SK-N-SH (cell line): ENCODE measurements at regions of chr3 and their contacts with region 1.

Region 1: DNA sequence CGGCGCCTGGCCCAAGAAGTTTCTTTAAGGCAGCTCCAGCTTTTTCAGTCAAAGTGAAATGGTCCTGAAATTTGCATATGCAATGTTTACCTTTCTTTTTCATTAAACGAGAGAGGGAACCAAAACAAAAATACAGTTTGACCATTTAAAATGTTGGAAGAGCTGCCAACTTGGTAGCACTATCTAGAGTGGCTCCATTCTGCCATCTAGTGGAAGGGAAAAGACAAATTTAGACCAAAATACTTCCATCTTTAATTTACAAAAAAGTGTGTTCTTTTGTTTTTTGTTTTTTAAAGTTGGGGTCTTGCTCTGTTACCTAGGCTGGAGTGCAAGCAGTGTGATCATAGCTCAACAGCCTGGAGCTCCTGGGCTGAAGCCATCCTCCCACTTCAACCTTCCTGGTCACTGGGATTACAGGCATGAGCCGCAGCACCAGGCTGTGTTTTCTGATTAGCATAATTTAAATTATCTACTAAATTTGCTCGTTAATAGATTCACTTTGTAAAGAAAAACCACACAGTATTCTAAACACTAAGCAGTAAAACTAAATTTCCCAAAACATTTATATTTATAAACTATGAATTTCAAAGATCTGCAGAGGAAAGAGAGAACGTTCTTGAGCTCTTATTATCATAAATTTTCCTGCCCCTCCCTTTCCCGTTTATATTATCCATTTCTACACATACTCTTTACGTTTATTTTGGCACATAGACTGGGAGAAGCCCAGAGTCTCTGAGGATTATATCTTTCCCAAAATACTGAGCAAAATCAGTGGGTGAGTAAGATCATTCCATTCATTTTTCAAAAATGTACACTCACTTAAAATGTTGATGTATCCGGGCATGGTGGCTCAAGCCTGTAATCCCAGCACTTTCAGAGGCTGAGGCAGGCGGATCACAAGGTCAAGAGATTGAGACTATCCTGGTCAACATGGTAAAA is 15.4 kb upstream of the RFC4 start:
- DNase-seq: peak; percentile 54
- H3K4me3 ChIP-seq: peak overlapping the region in 1 of 2 experiments; percentile 25; a peak in 1 of 4 replicates
- H3K27ac ChIP-seq: peak overlapping the region in 1 of 2 experiments; percentile 45; a peak in 2 of 4 replicates
- H3K4me1 ChIP-seq: no peaks in the 10 kb centered on the region; a peak in 1 of 4 replicates
- H3K27me3 ChIP-seq: no peaks in the 10 kb centered on the region
- CTCF ChIP-seq: peak; percentile 80
- EP300 ChIP-seq: no peak
- RAD21 ChIP-seq: peak; percentile 80

Region 2: GRCh38 chr3:186583831-186584230 is 237.9 kb before region 1 on chr3:
- CTCF ChIA-PET with region 1: interaction called, 11 read pairs
- POLR2A ChIA-PET with region 1: no interaction called
- DNase-seq: no peak
- H3K4me3 ChIP-seq: no peak overlapping the region
- H3K27ac ChIP-seq: no peak overlapping the region
- H3K4me1 ChIP-seq: no peaks in the 10 kb centered on the region
- H3K27me3 ChIP-seq: no peaks in the 10 kb centered on the region
- CTCF ChIP-seq: no peak
- EP300 ChIP-seq: no peak
- RAD21 ChIP-seq: no peak

Region 3: GRCh38 chr3:186589121-186589520 is 232.6 kb before region 1 on chr3:
- CTCF ChIA-PET with region 1: interaction called, 11 read pairs
- POLR2A ChIA-PET with region 1: no interaction called
- DNase-seq: no peak
- H3K4me3 ChIP-seq: no peak overlapping the region
- H3K27ac ChIP-seq: no peak overlapping the region
- H3K4me1 ChIP-seq: no peaks in the 10 kb centered on the region
- H3K27me3 ChIP-seq: no peaks in the 10 kb centered on the region
- CTCF ChIP-seq: peak; percentile 34
- EP300 ChIP-seq: no peak
- RAD21 ChIP-seq: peak; percentile 64

Region 4: GRCh38 chr3:186609247-186609868 is 212.3 kb before region 1 on chr3:
- CTCF ChIA-PET with region 1: interaction called, 119 read pairs
- POLR2A ChIA-PET with region 1: no interaction called
- DNase-seq: no peak
- H3K4me3 ChIP-seq: no peak overlapping the region
- H3K27ac ChIP-seq: no peak overlapping the region
- H3K4me1 ChIP-seq: no peaks in the 10 kb centered on the region; a peak in 1 of 4 replicates
- H3K27me3 ChIP-seq: peaks cover 4% of the 10 kb centered on the region; the same call in 1 of the 2 replicates
- CTCF ChIP-seq: peak; percentile 27; the same call in 1 of the 2 replicates
- EP300 ChIP-seq: no peak
- RAD21 ChIP-seq: no peak

Region 5: GRCh38 chr3:186625600-186626042 is 196.1 kb before region 1 on chr3:
- CTCF ChIA-PET with region 1: interaction called, 119 read pairs
- POLR2A ChIA-PET with region 1: no interaction called
- DNase-seq: no peak
- H3K4me3 ChIP-seq: no peak overlapping the region
- H3K27ac ChIP-seq: no peak overlapping the region
- H3K4me1 ChIP-seq: no peaks in the 10 kb centered on the region
- H3K27me3 ChIP-seq: peaks cover 20% of the 10 kb centered on the region; the same call in 1 of the 2 replicates
- CTCF ChIP-seq: no peak
- EP300 ChIP-seq: no peak
- RAD21 ChIP-seq: no peak

Region 6: GRCh38 chr3:186806089-186807055 is 15.3 kb before region 1 on chr3 and contains the start of gene RFC4:
- CTCF ChIA-PET with region 1: interaction called, 15 read pairs
- POLR2A ChIA-PET with region 1: no interaction called
- DNase-seq: peak; percentile 88
- H3K4me3 ChIP-seq: peak within 1 kb of the TSS; percentile 75 to 89
- H3K27ac ChIP-seq: peak within 1 kb of the TSS; percentile 15 to 86
- H3K4me1 ChIP-seq: peaks cover 8 to 12% of the 10 kb centered on the region in 2 experiments; a peak in 3 of 4 replicates
- H3K27me3 ChIP-seq: no peaks in the 10 kb centered on the region
- CTCF ChIP-seq: no peak
- EP300 ChIP-seq: no peak
- RAD21 ChIP-seq: no peak
- polyA plus RNA-seq, gene RFC4: 10.7 and 13.1 TPM in 2 replicates